ENCODE measurements at regions of chr16 and their contacts with region 1.

Region 1: GRCh38 chr16:75789237-75789636 is 62.9 kb upstream of the CPHXL start:
- DNase-seq: no peak
- H3K4me3 ChIP-seq: no peak overlapping the region
- H3K27ac ChIP-seq: no peak overlapping the region
- H3K4me1 ChIP-seq: no peaks in the 10 kb centered on the region
- H3K27me3 ChIP-seq: peaks cover 0 to 33% (median 0%) of the 10 kb centered on the region in 7 donors
- CTCF ChIP-seq: peak; percentile 50 to 80 (median 68)
- POLR2A ChIP-seq: no peak

Region 2: GRCh38 chr16:77171745-77172635 is 1382.8 kb after region 1 on chr16:
- intact Hi-C with region 1: loop called (anchors 2 kb)
- DNase-seq: no peak
- H3K4me3 ChIP-seq: no peak overlapping the region
- H3K27ac ChIP-seq: no peak overlapping the region
- H3K4me1 ChIP-seq: no peaks in the 10 kb centered on the region
- H3K27me3 ChIP-seq: peaks cover 0 to 35% (median 11%) of the 10 kb centered on the region in 7 donors
- CTCF ChIP-seq: peak in 10 of 11 experiments; percentile 23 to 76 (median 64)
- POLR2A ChIP-seq: no peak